Caco-2 (cell line): ENCODE measurements at regions of chr10 and their contacts with region 1.

Region 1: DNA sequence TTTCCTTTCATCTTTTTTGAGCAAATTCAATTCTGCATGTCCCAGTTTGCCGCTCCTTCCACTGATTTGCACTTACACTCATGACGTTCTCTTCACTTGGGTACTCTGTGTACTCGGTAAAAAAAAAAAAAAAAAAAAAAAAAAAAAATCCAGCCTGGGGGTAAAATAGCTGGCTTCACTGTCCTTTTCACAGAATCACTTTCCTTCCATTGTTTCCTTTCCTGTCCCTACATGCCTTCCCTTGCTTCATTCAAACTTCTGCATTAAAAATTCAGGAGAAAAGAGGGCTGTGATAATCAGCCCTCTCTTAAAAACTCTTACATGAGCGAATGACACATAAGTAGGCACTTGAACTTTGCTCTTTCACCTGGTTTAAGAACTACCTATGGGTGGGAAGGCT is 8.7 kb downstream of the ANKRD1 start:
- DNase-seq: no peak
- H3K4me3 ChIP-seq: no peak overlapping the region
- H3K4me3 Mint-ChIP-seq: peak overlapping the region; percentile 8
- H3K27ac Mint-ChIP-seq: peak overlapping the region; percentile 55
- H3K4me1 ChIP-seq: peaks cover 13% of the 10 kb centered on the region
- H3K4me1 Mint-ChIP-seq: peaks cover 35% of the 10 kb centered on the region
- H3K27me3 ChIP-seq: no peaks in the 10 kb centered on the region
- H3K27me3 Mint-ChIP-seq: no peaks in the 10 kb centered on the region
- CTCF ChIP-seq: no peak

Region 2: DNA sequence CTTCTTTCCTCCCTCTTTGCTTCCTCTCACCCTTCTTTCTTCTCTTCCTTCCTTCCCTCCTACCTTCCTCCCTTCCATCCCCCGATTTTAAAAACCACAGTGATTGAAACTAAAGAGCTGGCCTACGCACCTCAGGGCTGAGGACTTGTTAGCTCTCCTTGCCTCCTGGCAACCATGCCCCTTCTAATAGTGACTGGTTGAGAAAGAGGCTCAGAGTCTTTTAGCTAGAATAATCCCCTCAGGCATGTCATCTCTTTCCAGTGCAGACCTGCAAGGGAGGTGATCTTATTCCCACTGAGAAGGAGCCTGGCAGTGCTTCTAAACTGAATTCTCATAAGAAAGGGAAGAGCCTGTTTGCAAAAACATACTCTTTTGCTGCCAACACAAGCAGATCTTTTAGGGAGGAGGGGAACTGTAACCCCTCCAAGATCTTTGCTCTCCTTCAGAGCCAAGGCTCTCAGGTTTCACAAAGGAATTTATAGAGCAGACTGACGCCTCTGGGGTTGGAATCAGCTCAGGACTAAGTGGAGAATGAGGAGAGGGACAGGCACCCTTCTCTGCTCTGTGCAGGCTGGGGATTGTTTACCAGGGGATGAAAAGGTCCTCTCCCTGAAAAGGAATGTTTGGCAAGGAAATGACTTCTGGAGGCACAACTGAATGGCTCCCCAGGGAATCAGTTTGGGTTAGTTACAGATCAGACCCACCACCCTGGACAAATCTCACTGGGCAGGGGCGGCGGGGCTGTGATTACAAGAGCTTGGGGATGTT is 18.1 kb after region 1 on chr10:
- CTCF ChIA-PET with region 1: interaction called, 7 read pairs
- POLR2A ChIA-PET with region 1: interaction called, 11 read pairs
- intact Hi-C with region 1: loop called (anchors 1 kb)
- DNase-seq: peak; percentile 80 to 89
- H3K4me3 ChIP-seq: no peak overlapping the region
- H3K4me3 Mint-ChIP-seq: peak overlapping the region; percentile 54
- H3K27ac Mint-ChIP-seq: peak overlapping the region; percentile 89
- H3K4me1 ChIP-seq: peaks cover 69% of the 10 kb centered on the region
- H3K4me1 Mint-ChIP-seq: peaks cover 53% of the 10 kb centered on the region
- H3K27me3 ChIP-seq: no peaks in the 10 kb centered on the region
- H3K27me3 Mint-ChIP-seq: no peaks in the 10 kb centered on the region
- CTCF ChIP-seq: no peak

Region 3: GRCh38 chr10:90960355-90960814 is 48.2 kb after region 1 on chr10:
- CTCF ChIA-PET with region 1: no interaction called
- POLR2A ChIA-PET with region 1: no interaction called
- intact Hi-C with region 1: no loop called
- DNase-seq: no peak
- H3K4me3 ChIP-seq: no peak overlapping the region
- H3K4me3 Mint-ChIP-seq: no peak overlapping the region
- H3K27ac Mint-ChIP-seq: no peak overlapping the region
- H3K4me1 ChIP-seq: peaks cover 11% of the 10 kb centered on the region
- H3K4me1 Mint-ChIP-seq: peaks cover 8% of the 10 kb centered on the region
- H3K27me3 ChIP-seq: no peaks in the 10 kb centered on the region
- H3K27me3 Mint-ChIP-seq: no peaks in the 10 kb centered on the region
- CTCF ChIP-seq: no peak

Region 4: GRCh38 chr10:91006001-91006751 is 94.0 kb after region 1 on chr10:
- CTCF ChIA-PET with region 1: interaction called, 3 read pairs
- POLR2A ChIA-PET with region 1: no interaction called
- intact Hi-C with region 1: loop called (anchors 1 kb)
- DNase-seq: peak in 1 of 2 experiments; percentile 74
- H3K4me3 ChIP-seq: no peak overlapping the region
- H3K4me3 Mint-ChIP-seq: no peak overlapping the region
- H3K27ac Mint-ChIP-seq: no peak overlapping the region
- H3K4me1 ChIP-seq: peaks cover 5% of the 10 kb centered on the region; the same call in 1 of the 2 replicates
- H3K4me1 Mint-ChIP-seq: peaks cover 8% of the 10 kb centered on the region
- H3K27me3 ChIP-seq: no peaks in the 10 kb centered on the region
- H3K27me3 Mint-ChIP-seq: no peaks in the 10 kb centered on the region
- CTCF ChIP-seq: peak; percentile 82 to 93

Region 5: GRCh38 chr10:91043173-91043910 is 131.2 kb after region 1 on chr10:
- CTCF ChIA-PET with region 1: interaction called, 3 read pairs
- POLR2A ChIA-PET with region 1: no interaction called
- intact Hi-C with region 1: loop called (anchors 1 kb)
- DNase-seq: peak in 1 of 2 experiments; percentile 23
- H3K4me3 ChIP-seq: no peak overlapping the region
- H3K4me3 Mint-ChIP-seq: no peak overlapping the region
- H3K27ac Mint-ChIP-seq: no peak overlapping the region
- H3K4me1 ChIP-seq: no peaks in the 10 kb centered on the region
- H3K4me1 Mint-ChIP-seq: peaks cover 5% of the 10 kb centered on the region
- H3K27me3 ChIP-seq: no peaks in the 10 kb centered on the region
- H3K27me3 Mint-ChIP-seq: peaks cover 17% of the 10 kb centered on the region
- CTCF ChIP-seq: peak; percentile 43 to 55